ENCODE measurements at regions of chr1 and their contacts with region 1.

Region 1: GRCh38 chr1:103106426-103107341 is 1.6 kb downstream of the COL11A1 start:
- DNase-seq: peak; percentile 63
- H3K4me3 ChIP-seq: peak overlapping the region; percentile 35 to 68 (median 35)
- H3K27ac ChIP-seq: no peak overlapping the region
- H3K4me1 ChIP-seq: peaks cover 11% of the 10 kb centered on the region
- H3K27me3 ChIP-seq: peaks cover 2 to 9% of the 10 kb centered on the region in 2 experiments
- CTCF ChIP-seq: peak; percentile 36 to 43
- POLR2A ChIP-seq: no peak

Region 2: DNA sequence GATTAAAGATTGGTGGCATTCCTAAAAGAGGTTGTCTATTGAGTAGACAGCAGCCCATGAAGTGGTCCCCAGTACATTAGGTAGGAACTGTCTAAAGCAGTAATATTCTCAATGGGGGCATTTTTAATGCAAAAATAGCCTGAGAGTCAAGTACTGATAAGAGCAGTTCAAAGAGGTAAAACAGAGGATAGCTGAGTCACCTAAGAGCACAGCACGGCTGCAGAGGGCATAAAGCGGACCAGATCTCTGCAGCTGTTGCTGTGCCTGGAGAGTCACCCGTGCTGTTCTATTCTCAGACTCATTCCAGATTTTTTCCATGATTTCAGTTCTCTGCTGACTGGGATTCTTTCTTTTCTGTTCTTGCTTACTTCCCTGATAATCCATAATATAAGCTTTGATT is 1423.1 kb before region 1 on chr1:
- CTCF ChIA-PET with region 1: no interaction called
- POLR2A ChIA-PET with region 1: no interaction called
- dilution Hi-C with region 1: no loop called
- intact Hi-C with region 1: no loop called
- DNase-seq: no peak
- H3K4me3 ChIP-seq: no peak overlapping the region
- H3K27ac ChIP-seq: no peak overlapping the region
- H3K4me1 ChIP-seq: no peaks in the 10 kb centered on the region
- H3K27me3 ChIP-seq: no peaks in the 10 kb centered on the region
- CTCF ChIP-seq: no peak
- POLR2A ChIP-seq: no peak

Region 3: GRCh38 chr1:102699524-102699923 is 407.2 kb before region 1 on chr1:
- CTCF ChIA-PET with region 1: no interaction called
- POLR2A ChIA-PET with region 1: no interaction called
- dilution Hi-C with region 1: no loop called
- intact Hi-C with region 1: no loop called
- DNase-seq: no peak
- H3K4me3 ChIP-seq: no peak overlapping the region
- H3K27ac ChIP-seq: no peak overlapping the region
- H3K4me1 ChIP-seq: no peaks in the 10 kb centered on the region
- H3K27me3 ChIP-seq: no peaks in the 10 kb centered on the region
- CTCF ChIP-seq: no peak
- POLR2A ChIP-seq: no peak

Region 4: GRCh38 chr1:103250441-103250861 is 143.8 kb after region 1 on chr1:
- CTCF ChIA-PET with region 1: no interaction called
- POLR2A ChIA-PET with region 1: no interaction called
- dilution Hi-C with region 1: no loop called
- intact Hi-C with region 1: loop called (anchors 5 kb)
- DNase-seq: peak; percentile 72
- H3K4me3 ChIP-seq: no peak overlapping the region
- H3K27ac ChIP-seq: peak overlapping the region; percentile 69
- H3K4me1 ChIP-seq: peaks cover 5% of the 10 kb centered on the region
- H3K27me3 ChIP-seq: no peaks in the 10 kb centered on the region
- CTCF ChIP-seq: no peak
- POLR2A ChIP-seq: no peak

Region 5: GRCh38 chr1:103514920-103515503 is 408.3 kb after region 1 on chr1:
- CTCF ChIA-PET with region 1: interaction called, 68 read pairs
- POLR2A ChIA-PET with region 1: no interaction called
- dilution Hi-C with region 1: no loop called
- intact Hi-C with region 1: loop called (anchors 1 kb)
- DNase-seq: peak; percentile 66
- H3K4me3 ChIP-seq: no peak overlapping the region
- H3K27ac ChIP-seq: no peak overlapping the region
- H3K4me1 ChIP-seq: peaks cover 11% of the 10 kb centered on the region
- H3K27me3 ChIP-seq: no peaks in the 10 kb centered on the region
- CTCF ChIP-seq: peak; percentile 37 to 45
- POLR2A ChIP-seq: no peak

Region 6: DNA sequence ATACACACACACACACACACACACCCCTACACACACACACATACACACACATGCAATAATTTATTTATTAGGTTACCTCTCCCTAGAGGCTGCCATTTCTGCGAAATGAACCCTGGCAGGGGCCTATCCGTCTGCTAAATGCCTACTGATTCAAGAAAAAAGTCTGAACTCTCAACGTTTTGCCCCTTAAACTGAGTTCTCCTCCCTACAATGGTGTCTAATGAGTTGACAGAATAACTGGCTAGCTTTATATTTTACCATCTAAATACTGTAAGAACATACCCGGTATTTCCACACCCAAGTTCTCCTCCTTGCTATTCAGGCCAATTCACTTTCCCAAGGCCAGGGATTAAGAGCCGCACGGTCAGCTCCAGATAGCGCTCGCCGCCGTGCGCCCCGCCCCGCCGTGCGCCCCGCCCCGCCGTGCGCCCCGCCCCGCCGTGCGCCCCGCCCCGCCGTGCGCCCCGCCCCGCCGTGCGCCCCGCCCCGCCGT is 418.5 kb after region 1 on chr1:
- CTCF ChIA-PET with region 1: interaction called, 10 read pairs
- POLR2A ChIA-PET with region 1: no interaction called
- dilution Hi-C with region 1: no loop called
- intact Hi-C with region 1: no loop called
- DNase-seq: peak; percentile 56
- H3K4me3 ChIP-seq: peak overlapping the region in 1 of 3 experiments; percentile 60
- H3K27ac ChIP-seq: no peak overlapping the region
- H3K4me1 ChIP-seq: peaks cover 14% of the 10 kb centered on the region
- H3K27me3 ChIP-seq: no peaks in the 10 kb centered on the region
- CTCF ChIP-seq: no peak
- POLR2A ChIP-seq: no peak